ENCODE measurements at regions of chrX and their contacts with region 1.

Region 1: DNA sequence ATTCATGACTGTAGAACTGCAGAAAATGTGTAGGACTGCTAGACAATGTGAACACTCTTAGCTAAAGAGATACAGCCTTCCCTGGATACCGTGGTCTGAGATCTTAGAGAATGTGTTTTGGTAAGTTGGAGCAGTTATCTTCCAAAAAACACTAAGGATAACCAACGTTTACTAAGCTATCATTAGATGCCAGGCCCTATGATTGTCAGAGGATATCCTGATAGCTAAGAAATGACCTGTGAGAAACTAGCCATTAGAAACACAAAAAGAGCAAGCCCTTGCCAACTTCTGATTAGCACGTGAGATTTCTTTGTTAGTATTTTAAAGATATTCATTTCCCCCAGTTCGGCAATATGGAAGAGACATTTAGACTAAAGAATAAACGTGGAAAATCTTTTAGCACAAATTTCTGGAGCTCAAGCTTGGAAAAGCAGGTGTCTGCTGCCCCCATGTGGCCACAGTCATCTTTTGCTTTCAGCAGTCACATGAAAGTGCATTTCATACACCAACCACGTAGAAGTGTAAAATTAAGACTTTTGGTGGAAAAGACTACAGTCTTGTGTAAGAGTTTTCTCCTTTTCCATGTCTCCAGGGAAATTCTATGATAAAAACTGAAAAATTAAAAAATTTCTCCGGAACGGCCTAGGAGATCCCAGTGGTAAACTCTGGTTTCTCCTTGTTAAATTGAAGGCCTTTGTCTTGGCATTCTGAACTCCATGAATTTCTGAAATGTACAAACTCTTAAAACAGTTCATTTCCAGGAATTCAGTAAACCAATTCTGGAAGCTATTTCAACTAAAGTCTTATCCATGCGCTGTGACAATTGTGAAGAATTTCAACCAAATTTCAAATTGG is 136.4 kb downstream of the ZNF674 start:
- DNase-seq: peak; percentile 72 to 88 (median 82)
- ATAC-seq: no peak
- H3K4me3 ChIP-seq: no peak overlapping the region
- H3K27ac ChIP-seq: no peak overlapping the region
- H3K4me1 ChIP-seq: no peaks in the 10 kb centered on the region
- H3K27me3 ChIP-seq: no peaks in the 10 kb centered on the region

Region 2: GRCh38 chrX:45322382-45322781 is 1086.4 kb before region 1 on chrX:
- intact Hi-C with region 1: loop called in 1 of 4 experiments (anchors 10 kb)
- DNase-seq: peak in 2 of 3 donors; percentile 14 to 28
- ATAC-seq: no peak
- H3K4me3 ChIP-seq: no peak overlapping the region
- H3K27ac ChIP-seq: no peak overlapping the region
- H3K4me1 ChIP-seq: no peaks in the 10 kb centered on the region
- H3K27me3 ChIP-seq: no peaks in the 10 kb centered on the region

Region 3: GRCh38 chrX:45515262-45516215 is 893.2 kb before region 1 on chrX:
- intact Hi-C with region 1: loop called in 1 of 4 experiments (anchors 10 kb)
- DNase-seq: peak; percentile 51 to 53 (median 53)
- ATAC-seq: peak; percentile 83 to 87
- H3K4me3 ChIP-seq: no peak overlapping the region
- H3K27ac ChIP-seq: no peak overlapping the region
- H3K4me1 ChIP-seq: no peaks in the 10 kb centered on the region
- H3K27me3 ChIP-seq: no peaks in the 10 kb centered on the region

Measured in right cardiac atrium (tissue), 5 donors.